Panc1 (cell line): ENCODE measurements at regions of chr13 and their contacts with region 1.

Region 1: GRCh38 chr13:20773194-20774080 is at the start of gene EEF1AKMT1:
- DNase-seq: peak; percentile 25
- ATAC-seq: peak; percentile 97
- H3K4me3 ChIP-seq: peak within 1 kb of the TSS; percentile 62 to 63
- H3K27ac ChIP-seq: peak within 1 kb of the TSS; percentile 90
- H3K4me1 ChIP-seq: 0 out of 2 replicates have a peak, but pooled peaks cover 2% of the 10 kb centered on the region
- H3K27me3 ChIP-seq: no peaks in the 10 kb centered on the region
- CTCF ChIP-seq: no peak
- total RNA-seq, gene EEF1AKMT1: 5.4 TPM

Region 2: DNA sequence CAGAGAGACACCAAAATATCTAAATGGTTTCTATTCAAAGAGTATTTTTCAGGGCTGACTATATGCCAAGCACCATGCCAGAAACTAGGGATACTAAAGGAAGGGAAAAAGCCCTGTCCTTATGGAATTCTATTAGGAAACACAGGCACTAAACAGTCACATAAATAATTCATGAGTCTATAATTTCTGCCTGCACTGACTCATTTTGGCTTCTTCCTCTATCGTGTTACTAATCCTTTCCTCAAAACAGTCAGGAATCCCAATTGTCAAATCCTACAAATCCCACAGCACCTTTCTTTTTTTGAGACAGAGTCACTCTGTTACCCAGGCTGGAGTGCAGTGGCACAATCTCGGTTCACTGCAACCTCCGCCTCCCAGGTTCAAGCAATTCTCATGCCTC is 99.9 kb after region 1 on chr13:
- CTCF ChIA-PET with region 1: no interaction called
- POLR2A ChIA-PET with region 1: interaction called, 10 read pairs
- in situ Hi-C with region 1: no loop called
- intact Hi-C with region 1: no loop called
- DNase-seq: no peak
- ATAC-seq: no peak
- H3K4me3 ChIP-seq: no peak overlapping the region
- H3K27ac ChIP-seq: no peak overlapping the region
- H3K4me1 ChIP-seq: no peaks in the 10 kb centered on the region
- H3K27me3 ChIP-seq: no peaks in the 10 kb centered on the region
- CTCF ChIP-seq: no peak

Region 3: GRCh38 chr13:20891768-20892167 is 118.3 kb after region 1 on chr13:
- CTCF ChIA-PET with region 1: no interaction called
- POLR2A ChIA-PET with region 1: no interaction called
- in situ Hi-C with region 1: no loop called
- intact Hi-C with region 1: no loop called
- DNase-seq: no peak
- ATAC-seq: no peak
- H3K4me3 ChIP-seq: no peak overlapping the region
- H3K27ac ChIP-seq: no peak overlapping the region
- H3K4me1 ChIP-seq: no peaks in the 10 kb centered on the region
- H3K27me3 ChIP-seq: no peaks in the 10 kb centered on the region
- CTCF ChIP-seq: no peak